IMR-90 (cell line): ENCODE measurements at regions of chr17 and their contacts with region 1.

Region 1: GRCh38 chr17:45789874-45790273 is 5.8 kb downstream of the CRHR1 start:
- DNase-seq: no peak
- ATAC-seq: no peak
- H3K4me3 ChIP-seq: no peak overlapping the region
- H3K27ac ChIP-seq: no peak overlapping the region
- H3K4me1 ChIP-seq: peaks cover 1% of the 10 kb centered on the region; the same call in 1 of the 2 replicates
- H3K27me3 ChIP-seq: peaks cover 70% of the 10 kb centered on the region
- CTCF ChIP-seq: no peak
- POLR2A ChIP-seq: no peak
- RAD21 ChIP-seq: no peak

Region 2: GRCh38 chr17:45705123-45706009 is 84.5 kb before region 1 on chr17:
- CTCF ChIA-PET with region 1: no interaction called
- POLR2A ChIA-PET with region 1: no interaction called
- dilution Hi-C with region 1: no loop called
- in situ Hi-C with region 1: no loop called
- intact Hi-C with region 1: no loop called
- DNase-seq: peak; percentile 42
- ATAC-seq: no peak
- H3K4me3 ChIP-seq: no peak overlapping the region
- H3K27ac ChIP-seq: no peak overlapping the region
- H3K4me1 ChIP-seq: no peaks in the 10 kb centered on the region
- H3K27me3 ChIP-seq: peaks cover 11% of the 10 kb centered on the region
- CTCF ChIP-seq: no peak
- POLR2A ChIP-seq: no peak
- RAD21 ChIP-seq: no peak

Region 3: GRCh38 chr17:45759761-45760160 is 30.1 kb before region 1 on chr17:
- CTCF ChIA-PET with region 1: no interaction called
- POLR2A ChIA-PET with region 1: no interaction called
- dilution Hi-C with region 1: no loop called
- in situ Hi-C with region 1: no loop called
- intact Hi-C with region 1: loop called (anchors 2 kb)
- DNase-seq: no peak
- ATAC-seq: no peak
- H3K4me3 ChIP-seq: no peak overlapping the region
- H3K27ac ChIP-seq: no peak overlapping the region
- H3K4me1 ChIP-seq: no peaks in the 10 kb centered on the region
- H3K27me3 ChIP-seq: peaks cover 15% of the 10 kb centered on the region
- CTCF ChIP-seq: no peak
- POLR2A ChIP-seq: no peak
- RAD21 ChIP-seq: no peak